Mammary epithelial cell (primary cell): ENCODE measurements at regions of chr5 and their contacts with region 1.

Region 1: DNA sequence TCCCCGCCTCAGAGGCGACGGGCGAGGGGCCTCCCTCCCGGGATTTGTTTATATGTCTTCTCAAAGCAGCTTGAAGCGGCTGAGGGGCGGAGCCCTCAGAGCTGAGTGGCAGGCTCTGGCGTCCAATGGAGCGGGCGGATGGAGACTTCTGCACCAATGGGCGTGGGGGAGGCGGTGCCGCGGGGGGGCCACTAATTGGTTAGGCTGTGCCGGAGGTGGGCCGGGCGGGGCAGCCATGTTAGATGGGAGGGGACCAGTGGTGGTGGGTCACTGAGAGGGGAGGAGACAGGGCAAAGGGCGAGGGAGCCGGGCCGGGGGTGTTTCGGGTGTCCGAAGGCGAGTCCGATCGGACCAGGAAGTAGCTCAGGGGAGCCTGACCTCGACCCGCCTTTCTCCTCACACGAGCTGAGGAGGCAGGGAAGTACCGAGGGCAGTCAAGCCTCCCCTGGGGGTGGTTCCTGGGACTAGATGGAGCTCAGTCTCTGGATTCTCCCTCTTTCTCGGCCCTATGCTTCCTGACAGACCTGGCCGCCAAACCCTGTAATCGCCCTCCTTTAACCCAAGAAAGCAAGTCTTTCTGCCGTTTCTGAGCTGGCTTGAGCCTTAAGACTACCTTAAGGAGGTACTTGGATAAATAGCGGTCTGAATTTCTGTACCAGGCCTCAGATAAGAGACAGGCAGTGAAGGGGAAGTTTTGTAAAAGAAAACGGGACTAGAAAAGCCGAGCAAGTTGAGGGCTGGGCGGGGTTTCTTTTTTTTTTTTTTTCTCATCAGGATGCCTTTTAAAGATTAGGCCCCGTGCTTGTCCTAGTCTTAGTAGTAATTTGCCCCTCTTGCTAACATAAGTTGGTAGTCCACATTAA is 1.1 kb downstream of the CREBRF start:
- DNase-seq: peak; percentile 98
- H3K4me3 ChIP-seq: peak overlapping the region; percentile 72 to 95 (median 86)
- H3K27ac ChIP-seq: peak overlapping the region; percentile 92
- H3K4me1 ChIP-seq: peaks cover 8% of the 10 kb centered on the region
- H3K27me3 ChIP-seq: no peaks in the 10 kb centered on the region
- CTCF ChIP-seq: peak in 1 of 2 donors; percentile 26

Region 2: DNA sequence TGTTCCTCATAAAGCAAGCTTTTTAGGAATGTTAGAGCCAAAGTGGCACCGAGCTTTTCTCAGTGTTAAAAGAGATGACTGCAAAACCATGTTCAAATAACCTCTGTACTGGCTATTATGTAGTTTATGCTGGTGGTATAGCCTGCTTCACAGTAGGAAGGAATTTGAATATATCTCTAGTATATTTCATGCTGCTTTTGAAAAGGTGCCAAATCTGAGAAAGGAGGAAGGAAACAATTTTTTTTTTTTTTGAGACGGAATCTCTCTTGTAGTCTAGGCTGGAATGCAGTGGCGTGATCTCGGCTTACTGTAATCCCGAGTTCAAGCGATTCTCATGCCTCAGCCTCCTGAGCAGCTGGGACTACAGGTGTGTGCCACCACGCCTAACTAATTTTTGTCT is 12.4 kb after region 1 on chr5:
- CTCF ChIA-PET with region 1: interaction called, 11 read pairs
- dilution Hi-C with region 1: no loop called
- in situ Hi-C with region 1: no loop called
- intact Hi-C with region 1: no loop called
- DNase-seq: no peak
- H3K4me3 ChIP-seq: no peak overlapping the region
- H3K27ac ChIP-seq: no peak overlapping the region
- H3K4me1 ChIP-seq: no peaks in the 10 kb centered on the region
- H3K27me3 ChIP-seq: no peaks in the 10 kb centered on the region
- CTCF ChIP-seq: no peak

Region 3: GRCh38 chr5:173144200-173145176 is 87.2 kb after region 1 on chr5 and contains the start of gene BNIP1:
- CTCF ChIA-PET with region 1: no interaction called
- dilution Hi-C with region 1: no loop called
- in situ Hi-C with region 1: no loop called
- intact Hi-C with region 1: loop called (anchors 1 kb)
- DNase-seq: peak; percentile 93
- H3K4me3 ChIP-seq: peak within 1 kb of the TSS; percentile 79 to 89 (median 84)
- H3K27ac ChIP-seq: peak within 1 kb of the TSS; percentile 94
- H3K4me1 ChIP-seq: peaks cover 3% of the 10 kb centered on the region
- H3K27me3 ChIP-seq: no peaks in the 10 kb centered on the region
- CTCF ChIP-seq: peak; percentile 91 to 99
- total RNA-seq, gene BNIP1: 10.8 to 12.4 TPM

Region 4: GRCh38 chr5:173155912-173156311 is 98.6 kb after region 1 on chr5:
- CTCF ChIA-PET with region 1: no interaction called
- dilution Hi-C with region 1: no loop called
- in situ Hi-C with region 1: no loop called
- intact Hi-C with region 1: no loop called
- DNase-seq: no peak
- H3K4me3 ChIP-seq: no peak overlapping the region
- H3K27ac ChIP-seq: no peak overlapping the region
- H3K4me1 ChIP-seq: peaks cover 2% of the 10 kb centered on the region
- H3K27me3 ChIP-seq: no peaks in the 10 kb centered on the region
- CTCF ChIP-seq: no peak